A549 (cell line): ENCODE measurements at regions of chr1 and their contacts with region 1.

Region 1: GRCh38 chr1:26321315-26322041 is 3.7 kb downstream of the CD52 start:
- DNase-seq: peak; percentile 69 to 75
- ATAC-seq: peak; percentile 88 to 97
- H3K4me3 ChIP-seq: no peak overlapping the region
- H3K27ac ChIP-seq: peak overlapping the region in 1 of 2 experiments; percentile 67; a peak in 3 of 6 replicates
- H3K4me1 ChIP-seq: 0 out of 3 replicates have a peak, but pooled peaks cover 5% of the 10 kb centered on the region
- CTCF ChIP-seq: peak; percentile 63
- EP300 ChIP-seq: no peak
- POLR2A ChIP-seq: no peak
- RAD21 ChIP-seq: peak; percentile 78 to 88

Region 2: GRCh38 chr1:26181586-26182382 is 139.7 kb before region 1 on chr1:
- CTCF ChIA-PET with region 1: no interaction called
- POLR2A ChIA-PET with region 1: no interaction called
- DNase-seq: no peak
- ATAC-seq: no peak
- H3K4me3 ChIP-seq: no peak overlapping the region
- H3K27ac ChIP-seq: no peak overlapping the region
- H3K4me1 ChIP-seq: no peaks in the 10 kb centered on the region
- CTCF ChIP-seq: no peak
- EP300 ChIP-seq: no peak
- POLR2A ChIP-seq: no peak
- RAD21 ChIP-seq: no peak

Region 3: DNA sequence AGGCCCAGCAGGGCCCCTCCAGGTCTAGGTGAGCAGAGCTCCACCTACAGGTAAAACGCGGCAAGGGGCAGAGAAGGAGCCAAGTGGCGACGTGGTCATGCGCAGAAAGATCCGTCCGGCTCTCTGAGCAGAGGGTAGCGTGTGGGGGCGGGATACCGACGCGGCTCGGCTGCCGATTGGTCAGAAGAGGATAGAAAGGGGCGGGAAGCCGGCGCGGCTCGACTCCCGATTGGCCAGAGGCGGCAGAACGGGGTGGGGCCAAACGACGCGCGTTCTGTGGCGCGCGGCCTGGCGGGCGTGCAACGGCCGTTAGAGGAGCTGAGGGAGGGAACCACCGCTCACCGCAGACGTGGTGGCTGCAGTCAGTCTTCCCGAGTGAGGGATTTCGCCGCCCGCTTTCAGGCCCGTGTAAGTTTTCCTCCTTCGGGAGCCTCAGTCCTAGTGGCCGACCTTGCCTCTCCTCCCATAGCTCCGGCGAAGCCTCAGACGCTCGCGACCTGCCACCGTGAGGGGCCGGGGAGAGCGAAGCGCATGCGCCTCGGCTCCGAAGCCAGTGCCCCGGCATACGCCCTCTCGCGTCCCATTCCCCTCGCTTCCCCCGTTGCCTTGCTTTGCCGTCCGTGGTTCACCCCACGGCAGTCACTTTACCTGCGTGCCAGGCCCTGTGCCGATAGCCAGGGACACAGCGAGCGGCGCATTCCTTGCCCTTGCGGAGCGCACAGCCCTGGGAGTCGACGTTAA is 87.4 kb before region 1 on chr1 and contains the start of gene CEP85:
- CTCF ChIA-PET with region 1: interaction called, 16 read pairs
- POLR2A ChIA-PET with region 1: no interaction called
- DNase-seq: peak; percentile 96 to 97
- ATAC-seq: peak; percentile 94 to 97
- H3K4me3 ChIP-seq: peak within 1 kb of the TSS; percentile 69
- H3K27ac ChIP-seq: peak within 1 kb of the TSS; percentile 77 to 92
- H3K4me1 ChIP-seq: peaks cover 43% of the 10 kb centered on the region
- CTCF ChIP-seq: peak; percentile 64
- EP300 ChIP-seq: no peak
- POLR2A ChIP-seq: peak; percentile 79
- RAD21 ChIP-seq: peak; percentile 57 to 59
- polyA plus RNA-seq, gene CEP85: 21.1 and 25.6 TPM in 2 replicates

Region 4: DNA sequence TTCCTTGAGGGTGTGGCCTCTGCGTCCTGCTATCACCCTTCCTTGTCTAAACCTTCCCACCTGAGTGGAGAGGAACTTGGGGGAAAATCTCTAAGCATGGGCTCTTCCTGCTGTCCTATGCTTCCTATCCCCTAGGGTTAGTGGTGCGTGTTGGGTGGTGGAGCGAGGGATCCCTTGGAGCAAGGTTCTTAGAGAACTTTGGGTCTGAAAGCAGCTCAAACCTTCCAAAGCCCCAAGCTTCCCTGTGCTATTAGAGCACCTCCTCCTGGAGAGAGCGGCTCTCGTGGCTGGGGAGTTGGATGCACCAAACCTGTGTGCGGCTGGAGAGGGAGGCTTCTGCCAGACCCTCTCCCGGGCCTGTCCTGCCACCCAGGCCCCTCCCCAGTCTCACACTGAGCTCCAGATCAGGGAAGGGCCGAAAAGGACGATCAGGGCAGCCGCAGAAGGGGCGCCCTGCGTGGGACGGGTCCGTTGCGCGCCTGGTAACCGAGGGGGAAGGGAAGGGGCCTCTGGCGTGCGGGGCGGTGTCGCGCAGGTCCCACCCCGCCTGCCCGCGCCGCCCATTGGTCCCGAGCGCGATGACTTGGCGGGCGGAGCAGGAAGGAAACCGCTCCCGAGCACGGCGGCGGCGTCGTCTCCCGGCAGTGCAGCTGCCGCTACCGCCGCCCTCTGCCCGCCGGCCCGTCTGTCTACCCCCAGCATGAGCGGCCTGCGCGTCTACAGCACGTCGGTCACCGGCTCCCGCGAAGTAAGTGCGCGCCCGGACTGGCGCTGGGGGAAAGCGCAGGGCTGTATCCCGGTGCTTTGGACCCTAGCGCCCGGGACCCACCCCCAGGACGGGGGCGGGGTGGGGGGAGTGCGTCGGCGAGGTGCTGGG is 41.8 kb before region 1 on chr1 and contains the start of gene SH3BGRL3:
- CTCF ChIA-PET with region 1: interaction called, 128 read pairs
- POLR2A ChIA-PET with region 1: no interaction called
- DNase-seq: peak; percentile 73 to 75
- ATAC-seq: peak; percentile 82 to 90
- H3K4me3 ChIP-seq: peak within 1 kb of the TSS; percentile 98
- H3K27ac ChIP-seq: peak within 1 kb of the TSS; percentile 99
- H3K4me1 ChIP-seq: peaks cover 50% of the 10 kb centered on the region
- CTCF ChIP-seq: peak; percentile 41
- EP300 ChIP-seq: no peak
- POLR2A ChIP-seq: peak; percentile 77
- RAD21 ChIP-seq: no peak
- polyA plus RNA-seq, gene SH3BGRL3: 36.1 and 38.7 TPM in 2 replicates

Region 5: DNA sequence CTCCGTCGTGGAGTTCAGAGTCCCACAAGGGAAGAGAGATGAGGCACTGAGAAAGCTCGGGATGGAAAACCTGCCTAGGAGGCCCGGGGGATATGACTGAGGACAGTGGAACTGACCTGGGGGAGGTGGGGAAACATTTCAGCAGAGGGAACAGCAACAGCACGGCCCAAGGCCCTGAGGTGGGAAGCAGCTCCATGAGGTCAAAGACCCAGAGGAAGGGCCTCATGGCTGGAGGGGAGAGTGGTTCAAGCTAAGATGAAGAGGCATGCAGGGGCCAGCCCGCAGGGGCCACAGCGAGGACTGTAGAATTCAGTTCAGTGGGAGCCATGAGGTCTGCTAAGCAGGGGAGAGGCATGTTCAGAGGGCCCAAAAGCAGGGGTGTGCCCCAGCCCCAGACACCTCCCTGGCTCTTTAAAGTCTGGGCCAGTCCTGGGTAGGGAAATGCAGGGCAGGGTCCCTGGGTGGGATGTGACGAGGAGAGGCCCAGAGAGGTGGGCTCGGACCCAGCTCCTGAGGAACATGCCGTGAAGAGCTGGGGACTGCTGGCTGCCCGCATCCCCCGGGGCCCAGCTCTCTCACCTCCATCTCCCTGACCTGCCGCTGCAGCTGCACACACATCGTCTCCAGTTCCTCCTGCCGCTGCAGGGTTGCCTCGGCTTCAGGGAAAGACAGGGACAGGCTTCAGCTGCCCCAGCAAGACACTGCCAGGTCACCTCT is 25.0 kb before region 1 on chr1:
- CTCF ChIA-PET with region 1: interaction called, 15 read pairs
- POLR2A ChIA-PET with region 1: no interaction called
- DNase-seq: no peak
- ATAC-seq: no peak
- H3K4me3 ChIP-seq: no peak overlapping the region
- H3K27ac ChIP-seq: no peak overlapping the region
- H3K4me1 ChIP-seq: 0 out of 3 replicates have a peak, but pooled peaks cover 3% of the 10 kb centered on the region
- CTCF ChIP-seq: no peak
- EP300 ChIP-seq: no peak
- POLR2A ChIP-seq: no peak
- RAD21 ChIP-seq: no peak

Region 6: DNA sequence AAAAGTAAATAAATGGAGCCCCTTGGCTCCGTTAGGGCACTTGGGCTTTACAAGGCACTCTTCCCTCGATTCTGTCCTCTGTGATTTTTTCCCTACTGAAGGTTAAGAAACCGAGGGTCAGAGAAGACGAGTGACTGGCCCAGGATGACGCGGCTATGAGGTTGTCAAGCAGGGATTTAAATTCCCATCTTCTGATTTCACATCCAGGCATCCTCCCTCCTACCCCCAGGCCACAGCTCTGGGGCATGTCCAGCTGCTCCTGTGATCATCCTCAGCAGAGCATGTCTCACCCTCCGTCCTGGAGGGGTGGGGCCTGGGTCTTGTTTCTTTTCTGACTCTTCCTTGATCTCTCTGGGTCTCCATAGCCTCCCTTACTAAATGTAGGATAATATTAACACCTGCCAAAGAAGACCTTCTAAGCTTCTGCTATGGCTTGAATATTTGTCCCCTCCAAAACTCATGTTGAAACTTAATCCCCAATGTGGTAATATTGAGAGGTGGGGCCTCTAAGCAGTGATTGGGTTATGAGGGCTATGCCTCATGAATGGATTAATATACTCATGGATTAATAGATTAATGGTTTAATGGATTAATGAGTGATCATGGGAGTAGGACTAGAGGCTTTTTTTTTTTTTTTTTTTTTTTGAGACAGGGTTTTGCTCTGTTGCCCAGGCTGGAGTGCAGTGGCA is 27.9 kb after region 1 on chr1:
- CTCF ChIA-PET with region 1: interaction called, 12 read pairs
- POLR2A ChIA-PET with region 1: interaction called, 3 read pairs
- DNase-seq: peak; percentile 33 to 76
- ATAC-seq: peak; percentile 61 to 73
- H3K4me3 ChIP-seq: no peak overlapping the region
- H3K27ac ChIP-seq: peak overlapping the region; percentile 78 to 95
- H3K4me1 ChIP-seq: peaks cover 56% of the 10 kb centered on the region
- CTCF ChIP-seq: no peak
- EP300 ChIP-seq: no peak; a peak in 1 of 5 replicates
- POLR2A ChIP-seq: no peak
- RAD21 ChIP-seq: no peak

Region 7: DNA sequence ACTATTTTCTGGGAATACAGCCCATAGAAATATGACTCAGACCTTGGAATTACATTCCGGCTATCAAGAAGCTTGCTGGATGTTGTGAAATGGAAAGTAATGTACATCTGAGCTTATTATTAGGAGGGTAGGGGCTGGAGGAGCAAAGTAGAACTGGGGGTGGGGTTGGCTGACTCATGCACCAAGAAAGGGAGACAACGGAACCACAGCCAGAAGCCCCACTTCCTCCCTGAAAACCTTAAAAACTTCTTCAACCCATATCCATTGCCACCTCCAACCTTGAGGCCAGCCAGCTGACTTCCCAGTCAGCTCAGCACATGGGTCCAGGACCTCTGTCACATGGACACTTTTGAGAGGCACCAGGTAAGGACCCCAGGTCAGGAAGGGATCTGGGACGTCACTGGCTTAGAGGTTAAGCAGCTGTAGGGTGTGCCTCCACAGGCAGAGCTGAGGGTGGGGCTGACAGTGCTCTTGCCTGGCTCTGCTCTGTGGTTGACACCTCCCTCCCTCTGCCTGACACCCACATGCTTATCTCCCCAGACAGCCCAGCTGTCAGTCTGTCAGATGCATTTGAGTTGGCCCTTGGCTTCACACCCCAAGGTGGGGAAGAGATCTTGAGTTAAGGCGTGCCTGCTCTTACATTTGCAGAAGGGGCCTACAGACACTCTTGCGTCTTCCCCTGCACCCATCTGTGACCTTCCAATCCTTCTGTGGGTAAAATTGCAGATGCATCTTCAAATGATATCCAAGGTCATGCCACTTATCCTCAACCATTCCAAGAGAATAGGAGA is 56.8 kb after region 1 on chr1:
- CTCF ChIA-PET with region 1: interaction called, 15 read pairs
- POLR2A ChIA-PET with region 1: no interaction called
- DNase-seq: peak; percentile 64 to 74
- ATAC-seq: peak; percentile 89 to 90
- H3K4me3 ChIP-seq: no peak overlapping the region
- H3K27ac ChIP-seq: peak overlapping the region; percentile 58 to 87
- H3K4me1 ChIP-seq: peaks cover 16% of the 10 kb centered on the region
- CTCF ChIP-seq: no peak
- EP300 ChIP-seq: peak; percentile 14 to 17; a peak in 2 of 5 replicates
- POLR2A ChIP-seq: no peak
- RAD21 ChIP-seq: no peak